ENCODE measurements at regions of chr6 and their contacts with region 1.

Region 1: DNA sequence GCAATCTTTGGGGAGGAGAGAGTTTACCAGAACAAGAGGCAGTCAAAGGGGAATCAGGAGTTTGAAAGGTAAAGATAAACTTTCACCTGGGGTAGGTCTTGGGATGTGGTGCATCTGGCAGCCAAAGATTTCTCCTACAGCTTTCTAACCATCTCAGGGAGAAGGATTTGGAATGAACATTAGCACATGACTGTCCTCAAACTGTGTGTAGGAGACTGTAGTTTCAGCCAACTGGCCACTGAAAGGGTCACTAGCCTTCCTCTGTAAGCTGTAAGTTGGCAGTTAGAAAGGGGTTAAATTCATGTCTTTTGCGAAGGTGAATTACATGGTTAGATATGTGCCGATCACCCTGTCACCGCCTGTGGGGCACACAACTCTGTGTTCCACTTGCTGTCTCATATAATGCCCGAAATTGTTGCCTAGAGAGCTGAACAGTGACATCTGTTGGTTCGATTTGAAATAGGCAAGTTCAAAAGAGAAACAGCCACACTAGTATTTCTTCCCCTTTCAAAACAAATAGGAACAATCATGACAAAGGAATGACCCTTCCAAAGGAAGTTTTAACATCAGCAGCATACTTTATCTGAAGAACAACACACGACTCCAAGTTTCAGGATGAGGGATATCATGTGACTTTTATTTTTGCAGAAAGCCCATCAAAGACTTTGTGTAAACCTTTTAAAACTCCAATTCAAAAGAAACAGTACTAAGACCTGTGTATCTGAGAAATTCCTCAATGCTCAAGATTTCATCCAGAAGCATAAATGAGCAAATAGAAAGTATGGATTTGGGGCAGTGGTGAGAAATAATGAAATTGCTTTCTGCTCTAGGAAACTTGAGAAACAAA is 1.1 kb upstream of the OPN5 start:
- DNase-seq: peak; percentile 55
- ATAC-seq: peak; percentile 64
- H3K4me3 ChIP-seq: no peak overlapping the region
- H3K4me3 Mint-ChIP-seq: peak overlapping the region; percentile 6
- H3K27ac ChIP-seq: no peak overlapping the region
- H3K27ac Mint-ChIP-seq: no peak overlapping the region
- H3K4me1 ChIP-seq: peaks cover 3 to 4% of the 10 kb centered on the region in 2 donors
- H3K4me1 Mint-ChIP-seq: peaks cover 8% of the 10 kb centered on the region
- H3K27me3 ChIP-seq: peaks cover 0 to 9% (median 0%) of the 10 kb centered on the region in 4 experiments
- H3K27me3 Mint-ChIP-seq: peaks cover 21% of the 10 kb centered on the region
- CTCF ChIP-seq: peak; percentile 72

Region 2: DNA sequence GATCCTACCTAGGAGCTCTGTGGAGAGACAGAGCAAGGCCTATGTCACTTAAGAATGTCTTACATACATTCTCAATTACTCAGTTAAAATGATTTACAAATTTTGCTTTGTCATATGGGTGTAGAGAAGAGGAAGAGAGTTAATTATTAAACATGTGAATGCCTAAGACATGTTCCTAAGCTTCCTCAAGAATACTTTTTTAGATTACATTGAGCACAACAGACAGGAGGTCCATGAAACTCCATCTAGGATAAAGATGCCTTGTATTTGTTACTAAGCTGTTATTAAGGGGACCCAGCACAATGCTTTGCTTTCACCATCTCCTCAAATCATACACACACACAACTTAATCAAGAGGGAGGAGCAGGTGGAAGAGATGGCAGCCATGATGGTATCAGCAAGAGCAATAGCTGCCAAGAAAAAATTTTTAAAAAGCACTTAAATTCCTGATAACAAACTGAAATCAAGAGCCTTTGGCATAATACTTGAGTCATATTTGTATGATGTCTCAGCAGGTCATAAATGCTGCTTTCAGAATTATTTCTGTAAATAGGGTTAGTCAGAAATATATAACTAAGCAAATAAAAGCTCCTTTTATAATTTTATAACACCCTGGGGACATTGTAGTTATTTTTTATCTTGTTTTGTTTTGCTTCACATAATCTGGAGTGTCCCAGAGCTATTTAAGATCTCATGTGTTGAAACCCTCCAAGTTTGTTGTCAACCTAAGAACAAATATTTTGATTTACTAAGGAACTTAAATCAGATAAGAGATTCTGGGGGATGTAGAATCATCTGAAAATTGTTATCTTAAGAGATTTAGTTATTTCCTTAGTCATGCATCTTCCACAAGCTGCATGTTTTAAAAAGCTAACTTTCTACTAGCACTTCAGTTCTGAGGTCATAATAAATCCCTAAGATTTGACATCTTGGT is 373.1 kb before region 1 on chr6:
- CTCF ChIA-PET with region 1: interaction called, 59 read pairs
- POLR2A ChIA-PET with region 1: no interaction called
- intact Hi-C with region 1: no loop called
- DNase-seq: no peak
- ATAC-seq: no peak
- H3K4me3 ChIP-seq: no peak overlapping the region
- H3K4me3 Mint-ChIP-seq: no peak overlapping the region
- H3K27ac ChIP-seq: no peak overlapping the region
- H3K27ac Mint-ChIP-seq: no peak overlapping the region
- H3K4me1 ChIP-seq: peaks cover 5 to 6% of the 10 kb centered on the region in 2 donors
- H3K4me1 Mint-ChIP-seq: peaks cover 16% of the 10 kb centered on the region
- H3K27me3 ChIP-seq: no peaks in the 10 kb centered on the region
- H3K27me3 Mint-ChIP-seq: peaks cover 7% of the 10 kb centered on the region
- CTCF ChIP-seq: no peak